ENCODE measurements at regions of chr7 and their contacts with region 1.

Region 1: GRCh38 chr7:133911724-133912123 is 215.4 kb upstream of the LRGUK start:
- DNase-seq: no peak
- ATAC-seq: no peak
- H3K4me3 ChIP-seq: no peak overlapping the region
- H3K4me3 Mint-ChIP-seq: no peak overlapping the region
- H3K27ac ChIP-seq: no peak overlapping the region
- H3K27ac Mint-ChIP-seq: no peak overlapping the region
- H3K4me1 ChIP-seq: no peaks in the 10 kb centered on the region
- H3K4me1 Mint-ChIP-seq: no peaks in the 10 kb centered on the region
- H3K27me3 ChIP-seq: no peaks in the 10 kb centered on the region
- H3K27me3 Mint-ChIP-seq: no peaks in the 10 kb centered on the region

Region 2: DNA sequence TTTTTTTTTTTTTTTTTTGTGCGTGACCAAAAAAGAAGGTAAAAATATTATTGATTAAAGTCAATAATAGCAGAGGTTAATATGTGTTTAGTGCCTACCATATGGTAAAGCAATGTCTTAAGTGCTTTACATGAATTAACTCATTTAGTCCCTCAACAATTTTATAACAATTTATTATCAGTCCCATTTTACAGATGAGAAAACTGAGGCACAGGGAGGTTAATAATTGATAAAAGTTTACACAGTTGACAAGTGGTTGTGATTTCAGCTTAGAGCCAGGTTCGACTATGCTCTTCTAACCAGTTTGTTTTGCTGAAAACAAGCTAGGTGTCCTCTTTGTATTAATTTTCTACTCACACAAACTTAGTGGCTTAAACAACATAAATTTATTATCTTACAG is 591.9 kb before region 1 on chr7:
- CTCF ChIA-PET with region 1: no interaction called
- POLR2A ChIA-PET with region 1: interaction called in 1 of 2 experiments, 11 read pairs
- DNase-seq: no peak
- ATAC-seq: no peak
- H3K4me3 ChIP-seq: no peak overlapping the region
- H3K4me3 Mint-ChIP-seq: no peak overlapping the region
- H3K27ac ChIP-seq: no peak overlapping the region
- H3K27ac Mint-ChIP-seq: no peak overlapping the region
- H3K4me1 ChIP-seq: no peaks in the 10 kb centered on the region
- H3K4me1 Mint-ChIP-seq: peaks cover 3 to 10% (median 5%) of the 10 kb centered on the region in 3 donors
- H3K27me3 ChIP-seq: no peaks in the 10 kb centered on the region
- H3K27me3 Mint-ChIP-seq: no peaks in the 10 kb centered on the region

Measured in T-cell (primary cell).